Mammary epithelial cell (primary cell): ENCODE measurements at regions of chr4 and their contacts with region 1.

Region 1: DNA sequence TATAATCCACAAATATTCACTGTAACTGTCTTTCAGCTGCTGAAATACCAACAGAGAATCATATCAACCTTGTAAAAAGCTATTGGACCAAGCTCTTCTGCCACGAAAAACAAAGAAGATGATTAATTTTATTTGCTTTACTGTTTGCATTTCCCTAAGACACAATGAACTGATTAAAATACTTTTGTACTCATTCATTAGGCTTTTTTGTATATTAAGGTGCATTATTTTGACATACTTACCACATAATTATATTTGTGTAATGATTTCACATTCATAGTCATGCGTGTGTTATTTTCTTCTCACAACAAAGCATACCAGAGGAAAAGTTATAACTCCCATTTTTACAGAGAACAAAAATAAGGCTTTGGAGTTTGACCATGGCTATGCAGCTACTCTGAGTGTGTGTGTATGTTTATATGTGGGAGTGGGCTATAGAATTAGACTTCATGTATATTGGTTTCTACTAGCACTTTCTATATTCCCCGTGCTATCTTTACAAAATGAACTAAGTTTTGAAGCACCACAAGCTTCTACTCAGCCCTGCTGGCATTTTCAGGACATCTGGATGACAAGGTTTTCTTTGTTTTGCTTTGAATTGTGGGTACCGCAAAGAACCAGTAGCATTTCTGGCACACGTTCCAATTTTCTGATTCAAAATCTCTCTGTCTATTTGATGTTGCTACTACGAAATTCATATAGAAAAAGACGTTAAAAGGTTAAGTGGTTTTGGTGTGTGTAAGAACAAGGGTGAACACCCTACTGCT is 11.0 kb upstream of the FGF5 start:
- DNase-seq: peak; percentile 47
- H3K4me3 ChIP-seq: no peak overlapping the region
- H3K27ac ChIP-seq: no peak overlapping the region
- H3K4me1 ChIP-seq: peaks cover 8% of the 10 kb centered on the region
- H3K27me3 ChIP-seq: no peaks in the 10 kb centered on the region
- CTCF ChIP-seq: no peak

Region 2: DNA sequence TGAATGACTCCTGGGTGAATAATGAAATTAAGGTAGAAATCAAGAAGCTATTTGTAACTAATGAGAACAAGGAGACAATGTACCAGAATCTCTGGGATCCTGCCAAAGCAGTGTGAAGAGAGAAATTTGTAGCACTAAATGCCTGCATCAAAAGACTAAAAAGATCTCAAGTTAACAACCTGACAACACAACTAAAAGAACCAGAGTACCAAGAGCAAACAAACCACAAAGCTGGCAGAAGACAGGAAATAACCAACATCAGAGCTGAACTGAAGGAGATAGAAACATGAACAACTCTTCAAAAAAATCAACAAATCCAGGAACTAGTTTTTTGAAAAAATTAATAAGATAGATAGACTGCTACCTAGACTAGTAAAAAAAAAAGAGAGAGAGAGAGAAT is 88.4 kb after region 1 on chr4:
- CTCF ChIA-PET with region 1: interaction called, 10 read pairs
- dilution Hi-C with region 1: no loop called
- in situ Hi-C with region 1: no loop called
- intact Hi-C with region 1: no loop called
- DNase-seq: no peak
- H3K4me3 ChIP-seq: no peak overlapping the region
- H3K27ac ChIP-seq: no peak overlapping the region
- H3K4me1 ChIP-seq: no peaks in the 10 kb centered on the region
- H3K27me3 ChIP-seq: peaks cover 6% of the 10 kb centered on the region
- CTCF ChIP-seq: no peak